PC-3 (cell line): ENCODE measurements at regions of chr6 and their contacts with region 1.

Region 1: DNA sequence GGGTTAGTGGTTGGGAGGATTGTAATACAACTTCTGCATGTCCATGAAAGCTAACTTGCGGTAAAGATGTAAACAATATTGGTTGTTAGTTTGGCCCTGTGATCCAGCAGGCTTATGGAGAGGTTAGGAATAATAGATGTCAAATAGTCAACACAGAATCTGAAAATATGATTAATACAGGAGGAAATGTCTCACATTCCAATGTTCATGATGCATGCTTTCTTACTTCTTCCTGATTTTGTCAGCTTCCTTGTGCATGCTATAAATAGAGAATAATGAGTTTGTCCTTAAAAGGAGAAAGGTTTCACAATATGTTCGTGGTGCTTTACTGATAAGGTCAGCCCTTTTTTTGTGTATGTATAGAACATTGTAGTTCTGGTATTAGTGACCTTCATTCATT is 136.7 kb downstream of the MMUT start:
- DNase-seq: peak; percentile 85
- ATAC-seq: peak; percentile 94
- H3K4me3 ChIP-seq: peak overlapping the region; percentile 36; the same call in 1 of the 2 replicates
- H3K27ac ChIP-seq: peak overlapping the region; percentile 67
- H3K4me1 ChIP-seq: peaks cover 23% of the 10 kb centered on the region
- H3K27me3 ChIP-seq: no peaks in the 10 kb centered on the region
- CTCF ChIP-seq: no peak

Region 2: GRCh38 chr6:49118478-49118877 is 207.9 kb before region 1 on chr6:
- CTCF ChIA-PET with region 1: no interaction called
- POLR2A ChIA-PET with region 1: no interaction called
- intact Hi-C with region 1: loop called (anchors 2 kb)
- DNase-seq: peak; percentile 65
- ATAC-seq: peak; percentile 95
- H3K4me3 ChIP-seq: no peak overlapping the region
- H3K27ac ChIP-seq: peak overlapping the region; percentile 22
- H3K4me1 ChIP-seq: peaks cover 34% of the 10 kb centered on the region
- H3K27me3 ChIP-seq: no peaks in the 10 kb centered on the region
- CTCF ChIP-seq: no peak

Region 3: DNA sequence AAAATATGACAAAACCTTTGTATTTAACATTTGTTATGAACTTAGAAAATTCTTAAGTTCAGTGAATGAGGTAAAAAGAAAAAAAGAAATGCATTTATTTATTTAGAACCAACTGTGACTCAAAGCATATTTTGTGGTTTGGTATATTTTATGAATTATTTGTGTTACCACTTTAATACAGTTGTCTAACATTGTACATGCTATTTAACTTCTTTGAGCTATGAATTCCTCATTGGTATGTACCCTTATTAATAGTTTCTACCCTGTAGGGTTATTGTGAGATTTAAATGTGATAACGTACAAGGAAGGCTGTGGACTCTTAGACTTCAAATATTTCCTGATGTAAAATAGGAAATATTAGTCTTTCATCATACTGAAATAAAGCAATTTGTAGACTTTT is 25.9 kb before region 1 on chr6:
- CTCF ChIA-PET with region 1: no interaction called
- POLR2A ChIA-PET with region 1: no interaction called
- intact Hi-C with region 1: loop called (anchors 2 kb)
- DNase-seq: peak; percentile 60
- ATAC-seq: peak; percentile 87
- H3K4me3 ChIP-seq: no peak overlapping the region
- H3K27ac ChIP-seq: peak overlapping the region; percentile 51
- H3K4me1 ChIP-seq: peaks cover 18% of the 10 kb centered on the region
- H3K27me3 ChIP-seq: no peaks in the 10 kb centered on the region
- CTCF ChIP-seq: no peak